ENCODE measurements at regions of chr4 and their contacts with region 1.

Region 1: DNA sequence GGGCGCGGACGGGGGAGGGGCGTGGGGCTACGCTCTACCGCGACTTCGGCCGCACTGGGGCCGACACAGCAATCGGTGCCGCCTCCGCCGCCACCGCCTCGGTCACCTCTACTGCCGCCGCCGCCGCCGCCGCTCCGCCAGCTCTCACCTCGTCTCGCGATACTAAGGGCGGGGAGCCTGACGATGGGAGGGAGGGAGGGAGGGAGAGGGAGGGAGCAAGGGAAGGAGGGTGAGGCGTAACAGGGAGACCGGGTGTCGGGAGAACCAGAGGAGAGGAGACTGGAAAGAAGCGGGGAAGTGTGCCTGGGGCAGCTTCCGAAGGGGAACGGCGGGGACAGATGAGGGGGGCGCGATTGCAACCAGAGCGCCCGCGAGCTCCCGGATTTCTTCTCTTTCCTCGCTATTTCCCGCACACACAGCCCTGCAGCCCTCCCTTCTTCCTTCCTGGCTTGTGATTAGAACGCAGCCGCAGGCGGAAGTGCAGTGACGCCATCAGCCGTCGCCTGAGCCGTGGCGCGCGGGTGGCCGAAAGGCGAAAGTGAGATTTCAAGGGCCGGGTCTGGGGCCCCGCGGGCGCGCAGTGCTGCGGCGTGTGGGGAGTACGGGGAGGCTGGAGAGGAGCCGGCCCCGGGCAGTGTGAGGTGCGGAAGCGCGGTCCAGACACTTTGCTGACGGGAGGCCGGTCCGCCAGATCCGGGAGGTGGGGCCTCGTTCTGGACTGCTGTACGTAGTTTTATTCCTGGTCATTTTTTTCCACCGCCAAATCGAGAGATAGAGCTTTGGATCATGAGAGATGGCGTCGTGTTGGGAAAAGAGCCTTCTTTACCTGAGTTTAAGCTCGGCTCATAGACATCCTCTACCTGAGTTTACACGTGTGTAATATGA is at the start of gene ANKRD17:
- DNase-seq: peak; percentile 95
- ATAC-seq: peak; percentile 76
- H3K4me3 Mint-ChIP-seq: peak within 1 kb of the TSS; percentile 99
- H3K27ac Mint-ChIP-seq: peak within 1 kb of the TSS; percentile 97
- H3K4me1 Mint-ChIP-seq: peaks cover 44% of the 10 kb centered on the region
- H3K27me3 Mint-ChIP-seq: no peaks in the 10 kb centered on the region
- total RNA-seq, gene ANKRD17: 58.4 to 63.7 TPM

Region 2: DNA sequence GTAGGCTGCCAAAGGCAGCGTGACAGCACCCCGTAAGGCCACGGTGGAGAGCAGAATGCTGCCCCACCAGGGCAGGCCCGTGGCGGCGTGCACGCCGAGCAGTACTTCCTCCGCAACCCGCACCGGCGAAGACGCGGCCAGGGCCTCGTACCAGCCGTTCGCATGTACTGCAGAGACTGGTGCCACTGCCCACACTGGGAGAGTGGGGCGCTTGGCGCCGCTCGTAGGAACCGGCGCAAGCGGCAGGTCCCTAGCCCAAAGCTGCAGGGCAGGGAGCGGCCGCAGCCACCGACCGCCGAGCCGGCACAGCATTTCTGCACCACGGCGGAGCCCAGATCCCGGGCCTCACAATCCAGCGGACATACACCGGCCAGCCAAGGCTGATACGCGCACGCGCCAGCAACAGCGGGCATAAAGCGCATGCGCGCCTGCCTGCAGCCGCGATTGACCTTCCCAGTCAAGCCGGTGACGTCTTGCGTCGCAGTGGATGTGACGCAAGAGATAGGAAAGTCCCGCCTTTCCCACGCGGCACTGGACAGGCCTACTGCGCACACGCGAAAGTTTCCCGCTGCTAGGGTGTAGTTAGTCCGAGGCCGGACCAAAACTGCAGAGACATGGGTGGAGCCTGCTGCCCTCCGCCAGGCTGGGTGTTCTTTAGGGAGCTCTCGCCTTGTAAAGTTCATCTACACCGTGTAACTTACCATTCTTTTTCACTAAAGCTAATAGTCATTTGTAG is 189.4 kb before region 1 on chr4 and contains the start of gene COX18:
- CTCF ChIA-PET with region 1: interaction called, 3 read pairs
- POLR2A ChIA-PET with region 1: interaction called, 8 read pairs
- intact Hi-C with region 1: loop called (anchors 1 kb)
- DNase-seq: peak; percentile 96
- ATAC-seq: peak; percentile 77
- H3K4me3 Mint-ChIP-seq: peak within 1 kb of the TSS; percentile 84
- H3K27ac Mint-ChIP-seq: peak within 1 kb of the TSS; percentile 100
- H3K4me1 Mint-ChIP-seq: peaks cover 34% of the 10 kb centered on the region
- H3K27me3 Mint-ChIP-seq: no peaks in the 10 kb centered on the region
- total RNA-seq, gene COX18: 17.9 to 21.3 TPM

Region 3: DNA sequence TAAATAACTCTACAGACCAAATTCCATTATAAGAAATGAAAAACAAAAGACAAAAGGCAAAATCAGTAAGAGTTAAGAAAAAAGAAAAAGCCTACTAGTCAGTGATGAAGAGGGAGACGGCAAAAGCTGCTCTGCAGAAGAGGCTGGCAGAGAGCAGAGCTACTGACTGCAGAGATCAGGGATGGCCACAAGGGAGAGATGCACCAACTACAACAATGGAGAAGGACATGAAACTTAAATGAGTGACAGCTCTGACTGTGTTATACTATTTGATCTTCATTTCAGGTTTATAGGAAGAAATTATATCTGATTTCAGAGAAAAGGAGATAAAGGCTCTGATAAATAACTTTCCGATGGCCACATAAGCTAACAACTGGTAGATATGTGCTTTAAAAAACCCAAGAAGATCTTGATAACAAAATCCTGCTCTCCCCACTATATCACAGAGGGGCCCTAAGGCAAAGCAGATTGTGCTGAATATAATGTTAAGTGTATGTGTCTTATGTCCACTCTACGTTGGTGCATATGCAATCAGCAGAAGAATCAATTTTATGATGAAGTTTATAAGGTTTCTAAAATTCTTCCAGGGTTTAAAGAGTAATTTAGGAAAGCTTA is 131.0 kb before region 1 on chr4:
- CTCF ChIA-PET with region 1: interaction called, 7 read pairs
- POLR2A ChIA-PET with region 1: no interaction called
- intact Hi-C with region 1: loop called in 1 of 2 experiments (anchors 5 kb)
- DNase-seq: peak; percentile 30
- ATAC-seq: peak; percentile 85
- H3K4me3 Mint-ChIP-seq: no peak overlapping the region
- H3K27ac Mint-ChIP-seq: no peak overlapping the region
- H3K4me1 Mint-ChIP-seq: no peaks in the 10 kb centered on the region
- H3K27me3 Mint-ChIP-seq: no peaks in the 10 kb centered on the region

Region 4: GRCh38 chr4:73161527-73162185 is 97.3 kb before region 1 on chr4:
- CTCF ChIA-PET with region 1: interaction called, 6 read pairs
- POLR2A ChIA-PET with region 1: no interaction called
- intact Hi-C with region 1: loop called in 1 of 2 experiments (anchors 10 kb)
- DNase-seq: no peak
- ATAC-seq: no peak
- H3K4me3 Mint-ChIP-seq: no peak overlapping the region
- H3K27ac Mint-ChIP-seq: no peak overlapping the region
- H3K4me1 Mint-ChIP-seq: no peaks in the 10 kb centered on the region
- H3K27me3 Mint-ChIP-seq: no peaks in the 10 kb centered on the region

Region 5: DNA sequence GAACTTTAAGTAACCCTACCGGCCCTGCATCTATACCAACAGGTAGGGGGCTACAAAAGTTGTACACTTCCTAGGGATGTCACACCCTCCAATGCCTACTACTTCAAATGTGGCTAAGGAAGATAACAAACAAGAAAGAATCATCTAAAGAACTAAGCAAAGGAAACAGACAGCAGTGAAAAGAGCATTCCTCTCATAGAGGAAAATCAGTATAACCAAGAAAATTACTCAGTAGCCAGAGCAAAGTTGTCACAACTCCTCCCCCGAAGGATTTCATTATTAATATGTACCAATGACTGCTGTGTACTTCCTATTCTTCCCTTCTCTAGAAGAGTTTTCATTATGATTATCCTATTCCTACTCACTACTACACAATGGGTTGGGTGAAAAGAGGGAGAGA is 13.0 kb before region 1 on chr4:
- CTCF ChIA-PET with region 1: interaction called, 5 read pairs
- POLR2A ChIA-PET with region 1: no interaction called
- intact Hi-C with region 1: loop called in 1 of 2 experiments (anchors 1 kb)
- DNase-seq: no peak
- ATAC-seq: peak; percentile 86
- H3K4me3 Mint-ChIP-seq: no peak overlapping the region
- H3K27ac Mint-ChIP-seq: peak overlapping the region; percentile 82
- H3K4me1 Mint-ChIP-seq: peaks cover 59% of the 10 kb centered on the region
- H3K27me3 Mint-ChIP-seq: no peaks in the 10 kb centered on the region

Measured in activated CD4-positive, alpha-beta T cell treated with anti-CD3 and anti-CD28 coated beads for 36 hours (primary cell).